ENCODE measurements at regions of chr14 and their contacts with region 1.

Region 1: GRCh38 chr14:100122481-100123222 is 36.8 kb downstream of the DEGS2 start:
- DNase-seq: no peak
- H3K4me3 ChIP-seq: no peak overlapping the region
- H3K27ac ChIP-seq: no peak overlapping the region
- H3K4me1 ChIP-seq: no peaks in the 10 kb centered on the region
- H3K27me3 ChIP-seq: no peaks in the 10 kb centered on the region
- CTCF ChIP-seq: no peak
- EP300 ChIP-seq: no peak
- POLR2A ChIP-seq: no peak

Region 2: DNA sequence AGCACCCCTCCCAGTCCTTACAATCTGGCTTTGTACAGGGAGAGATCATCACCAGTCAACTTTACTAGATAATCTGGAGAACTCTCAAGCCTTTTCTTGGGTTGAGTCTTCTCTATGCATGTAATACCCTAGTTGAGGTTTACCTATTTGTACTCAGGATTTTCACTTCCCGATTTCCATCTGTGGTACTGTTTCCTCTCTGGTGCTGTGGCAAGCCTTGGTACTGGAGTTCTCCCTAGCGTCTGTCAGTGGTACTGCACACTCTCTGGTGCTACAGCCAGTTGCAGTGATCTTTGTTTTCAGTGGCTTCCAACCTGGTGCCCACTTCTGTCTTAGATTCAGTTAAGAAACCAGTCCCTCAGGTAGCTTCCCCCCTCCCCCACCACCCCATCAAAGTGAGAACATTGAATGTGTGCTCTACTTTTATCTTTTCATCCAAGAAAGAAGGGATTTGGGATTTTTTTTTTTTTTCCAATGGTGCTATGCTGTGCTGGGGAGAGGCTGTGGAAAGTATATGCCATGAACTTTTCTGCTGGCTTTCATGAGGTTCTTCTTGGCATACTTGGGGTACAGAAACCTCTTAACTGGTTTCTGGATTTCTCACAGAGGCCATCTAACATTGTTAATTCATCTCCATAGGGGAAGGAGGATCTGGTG is 126.8 kb before region 1 on chr14:
- intact Hi-C with region 1: loop called in 1 of 4 experiments (anchors 5 kb)
- DNase-seq: peak in 2 of 5 donors; percentile 36 to 42
- H3K4me3 ChIP-seq: no peak overlapping the region
- H3K27ac ChIP-seq: no peak overlapping the region
- H3K4me1 ChIP-seq: no peaks in the 10 kb centered on the region
- H3K27me3 ChIP-seq: no peaks in the 10 kb centered on the region
- CTCF ChIP-seq: no peak
- EP300 ChIP-seq: no peak
- POLR2A ChIP-seq: no peak

Region 3: GRCh38 chr14:100173353-100173752 is 50.7 kb after region 1 on chr14:
- intact Hi-C with region 1: no loop called
- DNase-seq: no peak
- H3K4me3 ChIP-seq: no peak overlapping the region
- H3K27ac ChIP-seq: no peak overlapping the region
- H3K4me1 ChIP-seq: no peaks in the 10 kb centered on the region
- H3K27me3 ChIP-seq: no peaks in the 10 kb centered on the region
- CTCF ChIP-seq: no peak
- EP300 ChIP-seq: no peak
- POLR2A ChIP-seq: no peak